Posterior cingulate gyrus (tissue), 11 donors: ENCODE measurements at regions of chr16 and their contacts with region 1.

Region 1: DNA sequence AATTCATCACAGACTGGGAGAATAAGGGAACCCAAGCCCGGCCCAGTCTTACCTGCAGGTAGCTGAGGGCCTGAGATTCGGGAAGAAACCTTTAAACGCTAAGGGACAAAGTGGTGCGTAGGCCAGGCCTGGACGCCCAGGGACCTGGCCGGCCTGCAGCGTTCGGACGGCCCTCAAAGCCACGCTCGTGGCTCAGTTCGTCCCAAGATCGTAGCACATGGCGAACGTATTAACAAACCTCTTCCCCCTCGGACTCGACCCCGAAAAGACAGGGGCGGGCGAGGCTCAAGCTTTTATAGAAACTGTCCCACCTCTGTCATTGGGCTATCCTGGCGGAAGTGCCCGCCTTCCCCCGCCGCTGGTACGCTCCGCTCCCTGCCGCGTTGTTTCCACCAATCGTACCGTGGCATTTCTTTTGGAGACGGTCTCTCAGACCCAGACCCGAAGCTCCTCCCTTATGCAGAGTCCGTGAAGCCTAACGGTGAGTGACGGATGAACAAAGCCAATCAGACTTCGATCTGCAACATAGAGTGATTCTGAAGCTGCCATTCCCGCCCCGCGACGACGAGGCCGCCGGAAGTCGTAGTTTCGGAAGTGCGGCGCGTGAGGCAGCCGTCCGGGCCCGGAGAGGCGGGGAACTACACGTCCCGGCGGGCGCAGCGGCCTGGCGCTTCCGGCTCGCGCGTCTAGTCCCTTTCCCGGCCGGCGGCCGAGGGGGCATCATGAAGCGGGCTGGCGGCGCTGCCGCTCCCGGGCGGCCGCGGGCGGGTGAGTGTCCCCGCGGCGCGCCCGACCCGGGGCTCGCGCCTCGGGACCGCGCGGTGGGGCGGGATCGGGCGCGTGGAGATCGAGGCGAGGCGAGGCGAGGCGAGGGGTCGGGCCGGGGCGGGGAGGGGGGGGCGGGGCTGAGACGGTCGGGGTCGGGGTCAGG is at the start of gene TRAF7:
- DNase-seq: peak; percentile 97 to 100 (median 99)

Region 2: DNA sequence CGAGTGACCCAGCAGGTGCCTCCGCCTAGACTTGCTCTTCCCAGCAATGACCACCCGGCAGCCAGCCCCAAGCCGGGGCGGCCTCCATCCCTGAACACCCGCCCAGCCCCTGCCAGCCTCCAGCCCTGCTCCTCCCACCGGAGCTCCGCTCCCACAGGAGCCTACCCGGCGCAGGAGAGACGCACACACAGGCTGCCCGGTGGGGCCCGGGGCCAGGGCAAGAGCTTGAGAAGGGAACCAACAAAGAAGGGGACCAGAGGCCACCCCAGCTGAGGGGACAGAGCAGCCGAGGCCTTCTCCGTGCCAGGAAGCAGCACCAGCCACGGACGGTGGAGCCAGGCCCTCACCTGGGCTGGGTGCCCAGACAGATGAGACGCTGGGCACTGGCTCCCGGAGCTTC is 33.5 kb before region 1 on chr16:
- intact Hi-C with region 1: loop called (anchors 1 kb)
- DNase-seq: peak in 5 of 10 donors; percentile 38 to 92 (median 82)

Region 3: DNA sequence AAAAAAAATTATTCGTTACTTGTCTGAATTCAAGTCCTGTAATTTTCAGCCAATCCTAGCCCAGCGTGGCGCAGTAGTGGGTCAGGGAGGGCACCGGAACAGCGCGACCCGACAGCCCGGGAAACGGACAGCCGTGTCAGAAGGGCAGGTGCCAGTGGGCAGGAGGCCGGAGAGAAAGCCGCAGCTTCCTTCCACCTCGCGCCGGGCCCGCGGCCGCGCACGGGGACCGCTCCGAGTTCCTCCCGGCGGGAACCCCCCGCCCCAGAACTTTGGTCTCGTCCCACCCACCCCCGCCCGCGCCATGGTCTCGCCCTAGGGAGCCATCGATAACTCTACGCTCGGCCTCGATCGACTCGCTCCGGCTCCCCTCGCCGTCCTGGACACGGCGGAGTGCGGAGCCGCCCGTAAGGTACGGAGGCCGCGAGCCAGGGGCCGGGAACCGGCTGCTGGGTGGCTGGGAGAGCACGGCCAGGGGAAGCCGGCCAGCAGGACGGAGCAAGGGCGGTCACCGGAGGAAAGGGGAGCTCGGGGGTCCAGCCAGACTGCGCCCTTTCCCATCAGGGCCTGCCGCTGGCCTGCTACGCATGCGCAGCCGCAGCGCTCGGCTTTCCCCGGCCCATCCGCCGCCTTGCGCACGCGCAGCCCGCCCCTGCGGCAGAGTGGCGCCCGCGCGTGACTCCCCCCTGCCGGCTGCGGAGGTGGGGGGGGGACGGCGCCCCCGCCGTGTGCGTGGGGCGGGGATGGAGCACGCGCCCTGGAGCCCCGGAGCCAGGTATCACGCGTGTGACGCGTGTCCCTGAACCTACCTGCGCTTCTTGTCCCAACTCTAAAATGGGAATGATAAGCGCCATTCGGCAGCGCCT is 50.0 kb after region 1 on chr16 and contains the start of gene MLST8:
- intact Hi-C with region 1: loop called (anchors 5 kb)
- DNase-seq: peak; percentile 75 to 97 (median 84)

Region 4: DNA sequence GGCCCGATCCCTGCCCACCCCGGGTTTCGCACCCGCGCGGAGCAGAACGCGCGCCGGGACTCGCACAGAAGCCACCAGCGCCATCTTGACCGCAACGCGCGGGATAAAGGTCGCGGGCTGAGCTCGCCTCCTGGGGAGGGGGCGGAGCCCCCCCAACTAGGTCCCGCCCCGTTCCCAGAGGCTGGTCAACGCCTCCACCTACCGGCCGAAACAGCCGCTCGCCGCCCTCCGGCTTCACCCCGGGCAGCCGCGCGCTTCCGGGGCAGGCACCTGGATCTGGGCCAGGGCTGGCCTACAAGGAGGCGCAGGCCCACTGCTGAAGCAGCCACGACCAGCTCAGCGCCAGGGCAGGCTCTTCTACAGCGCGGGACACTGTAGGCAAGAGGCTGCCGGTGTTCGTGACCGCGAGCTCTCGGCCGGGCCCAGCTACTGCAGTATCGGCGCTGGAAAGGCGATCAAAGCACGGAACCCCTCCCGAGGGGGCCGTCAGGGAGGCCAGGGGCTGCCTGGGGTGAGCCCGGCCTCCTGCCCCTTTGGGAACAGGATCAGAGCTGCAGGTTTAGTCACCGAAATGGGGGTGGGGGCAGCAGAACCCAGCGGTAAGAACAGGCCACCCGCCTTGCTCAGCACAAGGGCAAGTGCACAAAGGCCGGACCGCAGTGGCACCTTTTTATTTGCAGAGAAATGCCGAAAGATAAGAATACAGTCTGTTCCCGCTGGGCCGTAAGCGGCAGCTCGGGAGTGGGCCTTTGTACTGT is 96.3 kb after region 1 on chr16 and contains the start of gene ECI1:
- intact Hi-C with region 1: loop called (anchors 1 kb)
- DNase-seq: peak; percentile 86 to 98 (median 91)